CD8-positive, alpha-beta T cell (primary cell): ENCODE measurements at regions of chrX and their contacts with region 1.

Region 1: GRCh38 chrX:96052078-96052477 is 632.6 kb upstream of the DIAPH2 start:
- DNase-seq: no peak
- ATAC-seq: no peak
- H3K4me3 ChIP-seq: no peak overlapping the region
- H3K4me3 Mint-ChIP-seq: no peak overlapping the region
- H3K27ac ChIP-seq: no peak overlapping the region
- H3K27ac Mint-ChIP-seq: no peak overlapping the region
- H3K4me1 ChIP-seq: no peaks in the 10 kb centered on the region
- H3K4me1 Mint-ChIP-seq: no peaks in the 10 kb centered on the region
- H3K27me3 ChIP-seq: no peaks in the 10 kb centered on the region
- H3K27me3 Mint-ChIP-seq: no peaks in the 10 kb centered on the region
- CTCF ChIP-seq: no peak

Region 2: GRCh38 chrX:96094616-96095015 is 42.5 kb after region 1 on chrX:
- CTCF ChIA-PET with region 1: no interaction called
- POLR2A ChIA-PET with region 1: no interaction called
- intact Hi-C with region 1: loop called in 1 of 2 experiments (anchors 10 kb)
- DNase-seq: no peak
- ATAC-seq: no peak
- H3K4me3 ChIP-seq: no peak overlapping the region
- H3K4me3 Mint-ChIP-seq: no peak overlapping the region
- H3K27ac ChIP-seq: no peak overlapping the region
- H3K27ac Mint-ChIP-seq: no peak overlapping the region
- H3K4me1 ChIP-seq: no peaks in the 10 kb centered on the region
- H3K4me1 Mint-ChIP-seq: no peaks in the 10 kb centered on the region
- H3K27me3 ChIP-seq: no peaks in the 10 kb centered on the region
- H3K27me3 Mint-ChIP-seq: no peaks in the 10 kb centered on the region
- CTCF ChIP-seq: no peak